Heart left ventricle (tissue), 16 donors: ENCODE measurements at regions of chr1 and their contacts with region 1.

Region 1: DNA sequence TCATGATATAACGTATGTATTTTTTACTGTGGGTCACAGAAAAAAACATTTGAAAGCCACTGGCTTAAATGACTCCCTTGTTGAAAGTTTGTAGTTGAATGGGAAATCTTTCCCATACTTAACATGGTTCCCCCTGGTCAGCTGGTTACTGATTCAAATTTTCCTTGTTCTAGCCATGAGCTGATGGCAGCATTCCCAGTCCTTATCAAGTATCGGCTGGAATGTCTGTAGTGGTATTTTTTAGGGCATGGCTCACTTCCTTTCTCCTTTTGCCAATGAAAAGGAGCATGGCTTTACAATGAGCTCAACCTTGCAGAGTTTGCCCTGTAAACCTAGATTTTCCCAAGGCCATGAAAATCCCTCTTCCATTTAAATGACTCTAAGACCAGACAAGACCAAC is 55.7 kb downstream of the GIPC2 start:
- DNase-seq: peak in 4 of 5 donors; percentile 50 to 76 (median 62)
- ATAC-seq: peak; percentile 74 to 94 (median 87)
- H3K4me3 ChIP-seq: no peak overlapping the region
- H3K27ac ChIP-seq: peak overlapping the region in 11 of 12 donors; percentile 21 to 83 (median 66)
- H3K4me1 ChIP-seq: peaks cover 0 to 44% (median 21%) of the 10 kb centered on the region in 12 donors
- H3K27me3 ChIP-seq: no peaks in the 10 kb centered on the region
- CTCF ChIP-seq: no peak
- POLR2A ChIP-seq: no peak

Region 2: DNA sequence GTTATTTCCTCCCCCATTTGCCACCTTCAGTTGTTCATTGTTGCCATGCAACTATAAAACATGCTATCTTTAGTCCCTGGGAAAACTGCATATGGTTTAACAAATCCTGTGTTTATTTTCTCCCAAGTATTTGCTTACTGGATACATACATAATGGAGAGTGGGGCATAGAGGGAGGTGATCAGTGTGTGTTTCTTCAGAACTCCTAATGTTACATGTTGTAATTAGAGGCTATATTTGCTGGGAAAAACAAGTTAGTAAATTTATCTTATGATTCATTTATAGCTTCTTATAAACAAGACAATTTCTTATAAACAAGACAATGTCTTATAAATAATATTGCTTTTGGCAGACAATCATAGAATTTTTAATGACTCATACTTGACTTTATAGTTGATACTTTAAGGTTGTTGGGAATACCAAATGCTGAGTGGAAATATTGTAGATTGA is 63.0 kb before region 1 on chr1:
- intact Hi-C with region 1: loop called in 2 of 10 experiments (anchors 10 kb)
- DNase-seq: no peak
- ATAC-seq: no peak
- H3K4me3 ChIP-seq: no peak overlapping the region
- H3K27ac ChIP-seq: no peak overlapping the region
- H3K4me1 ChIP-seq: peaks cover 0 to 16% (median 0%) of the 10 kb centered on the region in 12 donors
- H3K27me3 ChIP-seq: no peaks in the 10 kb centered on the region
- CTCF ChIP-seq: no peak
- POLR2A ChIP-seq: no peak